CD8-positive, alpha-beta memory T cell (primary cell): ENCODE measurements at regions of chr17 and their contacts with region 1.

Region 1: GRCh38 chr17:81683584-81684237 is at the starts of genes ARL16 and HGS:
- DNase-seq: peak; percentile 96 to 98 (median 98)
- H3K4me3 ChIP-seq: peak within 1 kb of the TSS; percentile 95
- H3K4me3 Mint-ChIP-seq: peak within 1 kb of the TSS; percentile 92 to 99 (median 97)
- H3K27ac ChIP-seq: peak within 1 kb of the TSS; percentile 79
- H3K27ac Mint-ChIP-seq: peak within 1 kb of the TSS; percentile 83 to 99 (median 94)
- H3K4me1 ChIP-seq: peaks cover 28% of the 10 kb centered on the region
- H3K4me1 Mint-ChIP-seq: peaks cover 26 to 44% (median 28%) of the 10 kb centered on the region in 3 donors
- H3K27me3 ChIP-seq: no peaks in the 10 kb centered on the region
- H3K27me3 Mint-ChIP-seq: peaks cover 0 to 3% of the 10 kb centered on the region in 2 donors
- total RNA-seq, gene ARL16: 16.3 to 19.7 TPM
- total RNA-seq, gene HGS: 122 to 135 TPM

Region 2: DNA sequence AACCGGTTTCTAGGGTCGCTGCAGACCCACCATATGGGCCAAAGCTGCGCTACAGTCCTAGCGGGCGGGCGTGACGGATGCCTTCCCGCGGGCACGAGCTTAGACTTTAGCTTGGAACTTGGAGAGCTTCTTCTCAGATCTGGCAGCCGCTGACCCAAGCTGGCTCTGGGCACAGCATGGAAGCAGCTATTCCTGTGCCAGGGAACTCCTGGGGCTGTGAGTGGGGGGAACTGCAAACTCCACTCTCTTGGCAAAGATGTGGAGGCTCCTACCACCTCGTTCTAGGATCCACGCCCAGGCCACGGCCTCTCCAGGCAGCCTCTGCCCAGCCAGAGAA is 140.4 kb before region 1 on chr17:
- CTCF ChIA-PET with region 1: no interaction called
- POLR2A ChIA-PET with region 1: no interaction called
- DNase-seq: no peak
- H3K4me3 ChIP-seq: no peak overlapping the region
- H3K4me3 Mint-ChIP-seq: no peak overlapping the region
- H3K27ac ChIP-seq: no peak overlapping the region
- H3K27ac Mint-ChIP-seq: no peak overlapping the region
- H3K4me1 ChIP-seq: no peaks in the 10 kb centered on the region
- H3K4me1 Mint-ChIP-seq: no peaks in the 10 kb centered on the region
- H3K27me3 ChIP-seq: no peaks in the 10 kb centered on the region
- H3K27me3 Mint-ChIP-seq: peaks cover 0 to 1% of the 10 kb centered on the region in 2 donors

Region 3: DNA sequence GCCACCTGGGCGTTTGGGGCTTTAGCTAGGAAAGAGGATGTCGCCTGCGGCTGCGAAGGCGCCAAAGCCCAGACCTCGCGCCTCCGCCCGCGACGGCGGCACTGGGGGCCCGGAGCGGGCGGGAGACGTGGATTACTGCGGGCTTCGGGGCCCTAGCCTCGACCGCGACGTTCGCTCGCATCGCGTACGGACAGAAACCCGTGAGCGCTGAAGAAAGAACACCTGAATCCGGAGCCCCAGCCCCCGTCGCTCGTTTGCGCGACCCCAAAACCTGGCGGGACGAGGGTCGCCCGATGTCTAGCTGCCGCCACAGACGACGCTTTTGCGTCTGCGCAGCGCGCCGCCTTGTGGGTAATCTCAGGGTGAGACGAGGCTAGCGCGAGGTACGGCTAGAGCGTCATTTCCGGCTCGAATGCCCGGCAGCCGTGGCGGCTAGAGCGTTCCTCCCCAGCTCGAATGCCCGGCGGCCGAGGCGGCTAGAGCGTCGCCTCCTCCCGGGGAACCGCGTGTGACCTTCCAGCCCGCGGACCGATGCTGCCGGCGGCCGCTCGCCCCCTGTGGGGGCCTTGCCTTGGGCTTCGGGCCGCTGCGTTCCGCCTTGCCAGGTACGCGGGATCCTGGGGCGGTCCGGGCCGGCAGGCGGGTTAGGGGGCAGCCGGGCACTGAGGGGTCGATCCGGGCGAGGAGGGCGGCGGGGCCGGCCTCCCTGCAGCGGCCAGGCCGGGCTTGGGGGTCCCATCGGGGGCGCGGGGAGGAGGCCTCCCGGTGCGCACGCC is 19.4 kb after region 1 on chr17 and contains the start of gene MRPL12:
- CTCF ChIA-PET with region 1: interaction called, 12 read pairs
- POLR2A ChIA-PET with region 1: interaction called, 38 read pairs
- DNase-seq: peak; percentile 84 to 92 (median 85)
- H3K4me3 ChIP-seq: peak within 1 kb of the TSS; percentile 63
- H3K4me3 Mint-ChIP-seq: peak within 1 kb of the TSS; percentile 85 to 99 (median 90)
- H3K27ac ChIP-seq: peak within 1 kb of the TSS; percentile 91
- H3K27ac Mint-ChIP-seq: peak within 1 kb of the TSS; percentile 94 to 98 (median 96)
- H3K4me1 ChIP-seq: peaks cover 31% of the 10 kb centered on the region
- H3K4me1 Mint-ChIP-seq: peaks cover 19 to 41% (median 23%) of the 10 kb centered on the region in 3 donors
- H3K27me3 ChIP-seq: no peaks in the 10 kb centered on the region
- H3K27me3 Mint-ChIP-seq: no peaks in the 10 kb centered on the region
- total RNA-seq, gene MRPL12: 246 to 255 TPM

Region 4: DNA sequence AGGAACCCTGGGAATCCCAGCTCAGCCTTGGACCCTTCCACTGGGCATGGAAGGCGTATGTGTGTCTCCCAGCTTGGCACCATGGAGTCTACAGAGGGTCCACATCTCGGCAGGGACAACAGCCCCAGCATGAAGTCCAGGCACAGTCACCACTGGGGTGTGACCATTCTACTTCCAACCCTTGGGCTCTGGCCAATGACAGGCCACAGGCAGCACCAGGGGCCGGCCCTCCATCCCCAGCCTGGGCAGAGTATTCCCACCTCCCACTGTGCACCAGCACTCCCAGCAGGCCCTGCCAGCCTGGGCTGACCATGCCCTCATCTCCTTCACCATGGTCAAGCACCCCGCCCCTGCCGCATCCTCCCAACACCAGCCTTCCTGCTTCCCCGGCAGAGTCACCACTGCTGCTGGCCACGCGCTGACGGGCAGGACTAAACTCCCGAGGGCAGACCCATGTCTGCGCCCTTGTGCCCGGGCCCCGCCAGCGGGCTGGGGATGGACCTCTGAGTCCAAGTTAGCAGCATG is 160.7 kb after region 1 on chr17:
- CTCF ChIA-PET with region 1: no interaction called
- POLR2A ChIA-PET with region 1: interaction called, 10 read pairs
- DNase-seq: no peak
- H3K4me3 ChIP-seq: no peak overlapping the region
- H3K4me3 Mint-ChIP-seq: no peak overlapping the region
- H3K27ac ChIP-seq: no peak overlapping the region
- H3K27ac Mint-ChIP-seq: no peak overlapping the region
- H3K4me1 ChIP-seq: no peaks in the 10 kb centered on the region
- H3K4me1 Mint-ChIP-seq: no peaks in the 10 kb centered on the region
- H3K27me3 ChIP-seq: no peaks in the 10 kb centered on the region
- H3K27me3 Mint-ChIP-seq: peaks cover 0 to 3% of the 10 kb centered on the region in 2 donors